ENCODE measurements at regions of chr17 and their contacts with region 1.

Region 1: DNA sequence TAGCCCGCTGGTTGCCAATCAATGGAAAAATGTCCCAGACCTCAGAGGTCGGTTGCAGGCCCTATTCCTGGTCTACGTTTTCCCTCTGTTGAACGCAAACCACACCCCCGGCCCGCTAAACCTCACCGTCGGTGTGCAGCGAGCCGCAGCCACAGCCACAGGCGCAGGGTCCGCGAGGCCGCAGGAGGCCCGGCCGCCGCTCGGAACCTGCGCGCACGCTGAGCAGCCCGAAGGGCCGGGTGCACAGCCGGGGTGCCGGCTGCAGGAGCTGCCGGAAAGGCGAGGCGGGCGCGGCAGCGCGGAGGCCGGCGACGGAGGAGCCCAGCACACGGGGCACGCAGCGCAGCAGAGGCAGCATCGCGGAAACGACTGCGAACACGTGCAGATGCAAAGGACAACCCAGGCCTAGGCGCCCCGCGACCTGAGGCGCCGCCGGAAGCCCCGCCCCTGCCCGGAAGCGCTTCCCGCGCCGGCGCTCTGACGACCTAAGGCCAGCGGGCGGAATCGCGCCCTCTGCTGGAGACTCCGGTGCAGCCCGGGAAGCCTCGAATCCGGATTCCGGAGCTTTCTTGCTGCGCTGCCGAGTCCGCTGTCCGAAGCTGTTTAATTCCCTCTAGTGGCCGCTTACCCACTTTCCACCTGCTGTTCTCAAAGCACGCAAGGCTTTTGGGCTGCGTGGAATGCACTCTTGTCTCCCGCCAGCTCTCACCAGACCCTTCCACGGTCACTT is at the start of gene C1QBP:
- DNase-seq: peak; percentile 55
- H3K4me3 ChIP-seq: peak within 1 kb of the TSS; percentile 84
- CTCF ChIP-seq: peak; percentile 85

Region 2: GRCh38 chr17:5249615-5250014 is 189.3 kb before region 1 on chr17:
- CTCF ChIA-PET with region 1: interaction called, 126 read pairs
- POLR2A ChIA-PET with region 1: interaction called, 4 read pairs
- DNase-seq: peak; percentile 41
- H3K4me3 ChIP-seq: no peak overlapping the region
- CTCF ChIP-seq: peak; percentile 67

Region 3: DNA sequence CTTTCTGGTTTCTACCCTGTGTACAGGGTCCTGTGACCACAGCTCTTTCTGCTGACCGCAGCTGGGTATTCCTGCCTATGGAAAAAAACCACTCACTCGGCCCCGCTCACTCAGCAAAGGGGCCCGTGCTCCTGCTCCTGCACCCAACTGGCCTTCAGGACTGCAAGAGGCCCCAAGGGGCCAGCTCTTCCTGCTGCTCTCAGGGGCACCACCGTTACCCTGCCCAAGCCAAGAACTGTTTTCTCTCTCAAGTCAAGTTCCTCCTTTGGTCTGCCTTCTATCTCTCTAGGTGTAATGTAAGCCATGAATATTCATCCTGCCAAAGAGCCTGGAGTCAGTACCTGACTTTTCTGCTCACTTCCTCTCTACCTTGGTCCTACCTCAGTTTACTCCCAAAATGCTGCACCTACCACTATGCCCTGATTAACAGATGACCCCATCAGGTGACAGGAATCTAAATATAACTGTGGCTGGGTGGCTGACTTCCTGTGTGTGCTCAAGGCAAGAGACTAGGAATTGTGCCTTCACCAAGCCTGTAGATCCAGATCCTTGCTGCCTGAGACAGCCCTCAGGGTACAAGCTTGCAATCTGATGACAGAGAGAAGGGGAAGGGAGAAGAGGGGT is 183.9 kb before region 1 on chr17:
- CTCF ChIA-PET with region 1: interaction called, 126 read pairs
- POLR2A ChIA-PET with region 1: interaction called, 4 read pairs
- DNase-seq: no peak
- H3K4me3 ChIP-seq: no peak overlapping the region
- CTCF ChIP-seq: no peak

Region 4: DNA sequence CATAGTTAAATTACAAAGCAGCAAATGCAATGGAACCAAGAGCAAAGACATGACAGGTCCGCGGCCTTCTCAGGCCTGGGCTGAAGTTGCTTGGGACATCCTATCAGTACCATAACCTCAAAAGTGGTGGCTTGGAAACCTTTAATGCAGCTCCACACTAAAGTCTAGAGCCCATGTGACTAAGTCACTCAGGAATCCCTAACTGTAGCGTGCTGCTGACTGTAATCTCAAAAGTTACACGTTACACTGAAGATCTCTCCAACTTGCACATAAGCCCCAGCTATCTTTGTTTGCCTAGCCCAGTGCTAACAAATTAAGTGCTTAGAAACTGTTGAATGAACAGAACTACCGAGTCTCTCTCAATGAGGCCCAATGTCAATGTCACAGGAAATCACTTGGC is 47.2 kb before region 1 on chr17:
- CTCF ChIA-PET with region 1: interaction called, 14 read pairs
- POLR2A ChIA-PET with region 1: no interaction called
- DNase-seq: no peak
- H3K4me3 ChIP-seq: no peak overlapping the region
- CTCF ChIP-seq: no peak

Region 5: GRCh38 chr17:5413682-5414081 is 25.2 kb before region 1 on chr17:
- CTCF ChIA-PET with region 1: interaction called, 28 read pairs
- POLR2A ChIA-PET with region 1: no interaction called
- DNase-seq: peak; percentile 74
- H3K4me3 ChIP-seq: no peak overlapping the region
- CTCF ChIP-seq: no peak

Region 6: DNA sequence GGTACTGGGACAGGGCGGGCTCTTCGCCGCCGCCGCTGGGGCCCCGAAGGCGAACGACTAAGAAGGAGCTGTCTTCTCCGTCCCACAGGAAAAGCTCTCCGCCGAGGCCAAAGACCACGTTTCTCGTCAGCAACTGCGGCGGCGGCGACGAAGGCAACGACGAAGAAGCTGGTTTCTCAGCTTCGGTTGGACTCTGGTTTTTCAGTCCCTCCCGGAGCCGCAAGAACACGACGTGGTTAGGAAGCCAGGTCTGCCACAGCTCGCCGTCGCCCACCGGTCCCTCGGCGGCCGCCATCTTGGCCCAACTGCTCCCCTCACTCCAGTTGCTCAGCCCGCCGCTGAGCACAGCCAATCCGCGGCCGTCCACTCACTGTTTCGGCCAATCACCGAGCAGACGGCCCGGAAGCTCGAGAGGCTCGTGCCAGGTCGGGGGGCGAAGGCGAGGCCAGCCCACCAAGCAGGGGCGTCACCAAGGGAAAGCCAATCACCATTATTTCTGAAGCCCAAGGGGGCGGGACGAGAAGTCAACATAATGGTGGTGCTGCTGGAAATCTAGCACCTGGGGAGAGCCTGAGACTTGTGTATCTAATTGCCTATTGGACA is 19.4 kb before region 1 on chr17 and contains the start of gene NUP88:
- CTCF ChIA-PET with region 1: interaction called, 162 read pairs
- POLR2A ChIA-PET with region 1: interaction called, 7 read pairs
- DNase-seq: peak; percentile 78
- H3K4me3 ChIP-seq: peak within 1 kb of the TSS; percentile 97
- CTCF ChIP-seq: no peak

Region 7: DNA sequence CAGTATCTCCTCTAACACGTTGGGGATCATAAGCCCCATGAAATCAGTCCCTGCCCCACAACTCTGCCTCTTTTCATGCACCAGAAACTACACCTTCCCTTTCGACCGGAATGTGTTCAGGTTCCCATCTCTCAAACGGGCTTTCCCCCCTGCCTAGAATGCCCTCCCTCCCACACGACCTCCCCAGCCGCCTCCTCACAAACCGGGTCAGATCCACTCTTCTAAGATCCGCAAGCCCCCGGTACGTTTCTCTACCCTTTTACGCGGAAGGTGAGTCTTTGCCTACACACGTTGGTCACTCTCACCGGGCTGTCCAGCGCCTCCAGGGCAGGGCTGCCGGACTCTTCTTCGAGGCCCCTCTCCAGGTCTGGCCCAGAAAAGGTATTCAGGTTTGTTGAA is 29.2 kb after region 1 on chr17:
- CTCF ChIA-PET with region 1: interaction called, 126 read pairs
- POLR2A ChIA-PET with region 1: interaction called, 3 read pairs
- DNase-seq: no peak
- H3K4me3 ChIP-seq: peak overlapping the region; percentile 90
- CTCF ChIP-seq: no peak